ENCODE measurements at regions of chr11 and their contacts with region 1.

Region 1: DNA sequence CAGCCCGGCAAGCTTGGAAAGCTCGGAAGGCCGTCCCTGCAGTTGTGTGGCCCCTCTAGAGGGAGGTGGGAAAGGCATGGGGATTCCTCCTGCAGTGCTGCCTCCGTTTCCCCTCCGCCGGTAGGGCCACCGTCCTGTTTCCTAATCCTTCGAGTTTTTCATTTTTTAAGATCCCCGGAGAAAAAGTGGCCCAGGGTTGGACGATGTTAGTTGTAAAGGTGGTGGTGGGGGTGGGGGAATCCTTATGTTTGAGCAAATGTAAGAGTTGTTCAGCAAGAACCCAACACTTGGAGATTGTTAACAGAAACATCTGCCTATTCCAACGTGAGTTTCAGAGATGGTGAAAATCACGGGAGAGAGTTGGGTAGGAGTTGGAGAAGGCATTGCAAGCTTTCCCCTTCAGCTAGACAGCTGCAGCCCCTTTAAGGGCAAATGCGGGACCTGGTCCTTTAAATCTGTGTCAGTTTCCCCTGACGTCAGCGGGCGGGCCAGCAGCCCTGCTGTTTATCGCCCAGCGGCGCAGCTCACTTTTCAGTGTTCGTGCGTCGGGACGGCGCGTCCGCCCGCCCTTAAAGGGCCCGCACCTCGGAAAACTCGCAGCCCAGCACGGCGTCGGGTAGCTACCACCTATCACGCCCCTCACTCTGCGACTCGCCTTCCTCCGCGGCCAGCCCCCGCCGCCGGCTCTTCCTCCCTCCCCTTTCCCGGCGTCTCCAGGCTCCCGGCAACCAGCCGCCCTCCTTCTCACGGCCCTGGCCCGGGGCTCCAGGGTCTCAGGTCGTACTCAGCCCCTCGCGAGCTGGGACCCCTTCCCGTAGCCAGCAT is at the start of gene SIDT2:
- DNase-seq: peak; percentile 78 to 93 (median 85)
- ATAC-seq: peak; percentile 94 to 95
- H3K4me3 Mint-ChIP-seq: peak within 1 kb of the TSS; percentile 89 to 97 (median 93)
- H3K27ac Mint-ChIP-seq: peak within 1 kb of the TSS; percentile 88 to 99 (median 98)
- H3K4me1 Mint-ChIP-seq: peaks cover 11 to 42% (median 32%) of the 10 kb centered on the region in 4 donors
- H3K27me3 Mint-ChIP-seq: no peaks in the 10 kb centered on the region
- polyA plus RNA-seq, gene SIDT2: 2.3 to 3.1 (median 2.3) TPM

Region 2: DNA sequence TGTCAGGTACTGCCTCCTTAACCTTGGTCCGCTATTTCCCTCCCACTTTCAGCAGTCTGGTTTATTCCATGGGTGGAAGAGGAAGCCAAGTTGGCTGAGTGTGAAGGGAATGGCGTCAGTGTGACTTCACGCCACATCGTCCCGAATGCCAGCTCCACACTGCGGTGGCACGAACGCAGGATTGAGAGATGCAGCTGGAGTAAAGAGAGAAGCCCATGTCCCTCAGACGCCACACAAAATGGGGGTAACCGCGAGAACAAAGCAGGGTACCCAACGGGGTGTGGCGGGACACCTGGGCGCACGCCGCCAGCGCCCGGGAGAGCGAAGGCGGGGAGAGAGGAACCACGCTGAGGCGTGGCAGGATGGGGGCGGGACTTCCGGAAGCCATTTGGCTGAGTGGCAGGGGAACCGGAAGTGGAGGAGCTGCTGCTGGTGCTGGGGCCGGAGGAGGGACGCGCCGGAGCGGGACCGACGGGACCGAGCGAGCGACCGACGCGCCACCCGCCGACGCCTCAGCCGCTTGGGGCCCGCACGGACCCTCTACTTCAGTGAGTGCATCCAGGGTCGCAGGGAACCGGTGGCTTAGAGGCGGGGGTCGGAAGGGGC is 34.4 kb before region 1 on chr11 and contains the start of gene PAFAH1B2:
- POLR2A ChIA-PET with region 1: interaction called, 46 read pairs
- DNase-seq: peak; percentile 91 to 97 (median 94)
- ATAC-seq: peak; percentile 86 to 88
- H3K4me3 Mint-ChIP-seq: peak within 1 kb of the TSS; percentile 94 to 99 (median 98)
- H3K27ac Mint-ChIP-seq: peak within 1 kb of the TSS; percentile 90 to 99 (median 97)
- H3K4me1 Mint-ChIP-seq: peaks cover 25 to 51% (median 47%) of the 10 kb centered on the region in 4 donors
- H3K27me3 Mint-ChIP-seq: peaks cover 2 to 10% (median 5%) of the 10 kb centered on the region in 5 donors
- polyA plus RNA-seq, gene PAFAH1B2: 14.4 to 19.5 (median 18.3) TPM